ENCODE measurements at regions of chr4 and their contacts with region 1.

Region 1: DNA sequence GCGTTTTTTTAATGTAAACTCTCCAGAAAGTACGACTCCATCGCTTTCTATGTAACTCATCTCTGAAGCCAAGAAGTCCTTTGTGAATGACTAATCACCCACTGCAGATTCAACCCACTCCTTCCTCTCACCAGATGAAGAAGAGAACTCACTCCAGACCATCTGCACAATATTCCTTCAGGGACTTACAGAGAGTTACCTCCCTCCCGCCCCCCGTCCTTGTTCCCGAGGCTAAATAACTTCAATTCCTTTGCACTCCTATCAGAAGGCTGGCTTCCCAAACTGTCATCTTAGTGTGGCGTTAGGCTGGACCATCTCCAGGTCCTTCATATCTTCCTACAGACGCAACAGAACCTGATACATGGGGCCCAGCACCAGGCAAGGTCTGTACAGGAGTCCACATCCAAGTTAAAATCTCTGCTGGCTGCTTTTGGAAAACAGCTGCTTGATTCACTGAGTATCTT is 82.4 kb downstream of the AFAP1 start:
- DNase-seq: no peak
- H3K4me3 Mint-ChIP-seq: peak overlapping the region; percentile 54
- H3K27ac Mint-ChIP-seq: peak overlapping the region; percentile 93
- H3K4me1 Mint-ChIP-seq: peaks cover 60% of the 10 kb centered on the region
- H3K27me3 Mint-ChIP-seq: peaks cover 16% of the 10 kb centered on the region

Region 2: DNA sequence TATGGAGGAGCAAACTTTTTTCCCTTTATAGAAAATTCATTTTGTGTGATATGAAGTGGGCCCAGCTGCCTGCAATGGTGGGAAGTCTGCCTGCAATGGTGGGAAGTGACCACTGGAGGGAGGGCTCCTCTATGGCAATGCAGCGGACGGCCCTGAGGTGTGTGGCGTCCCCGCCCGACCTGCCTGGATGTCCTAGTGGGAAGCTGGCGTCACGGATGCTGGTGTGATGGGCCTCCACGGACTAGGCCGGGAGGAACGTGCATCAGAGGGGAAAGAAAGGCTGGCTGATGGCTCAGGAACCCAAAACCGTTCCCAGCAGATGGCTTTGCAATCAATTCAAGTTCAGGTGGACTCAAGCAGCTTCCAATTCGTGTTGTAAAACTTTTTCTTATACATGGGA is 95.5 kb before region 1 on chr4:
- intact Hi-C with region 1: loop called (anchors 5 kb)
- DNase-seq: peak; percentile 26
- H3K4me3 Mint-ChIP-seq: no peak overlapping the region
- H3K27ac Mint-ChIP-seq: no peak overlapping the region
- H3K4me1 Mint-ChIP-seq: peaks cover 43% of the 10 kb centered on the region
- H3K27me3 Mint-ChIP-seq: no peaks in the 10 kb centered on the region

Region 3: DNA sequence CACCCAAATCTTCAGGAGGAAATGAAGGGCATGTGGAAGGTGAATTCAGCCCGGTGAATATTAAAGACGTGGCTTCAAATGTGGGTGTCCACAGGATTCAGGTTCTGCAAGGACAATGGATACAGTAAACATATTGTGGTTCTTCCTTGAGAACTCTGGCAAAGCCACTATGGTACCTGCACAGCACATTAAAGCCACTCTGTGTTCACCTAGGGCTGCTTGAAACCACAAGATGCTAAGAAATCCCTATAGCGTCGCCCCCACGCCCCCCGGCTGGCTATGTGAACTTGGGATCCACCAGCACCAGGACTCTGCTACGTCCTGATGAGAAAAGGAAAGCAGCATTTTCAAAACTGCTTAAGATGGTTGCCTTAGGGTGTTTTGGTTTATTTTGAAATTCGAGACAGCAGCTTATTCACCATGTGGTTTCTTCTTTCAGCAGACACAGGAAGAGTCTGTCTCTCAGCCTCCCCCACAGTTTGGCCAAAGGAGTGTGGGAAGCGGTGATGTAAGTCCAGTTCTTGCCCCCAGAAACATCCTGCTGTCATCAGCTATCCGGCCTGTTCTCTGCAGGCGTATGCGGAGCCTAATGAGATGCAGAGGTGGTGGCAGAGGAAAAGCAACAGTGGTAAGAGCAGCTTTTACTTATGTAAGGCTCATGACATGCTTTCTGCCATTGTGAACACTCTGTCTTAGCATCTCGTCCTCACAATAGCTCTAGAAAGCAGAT is 29.1 kb before region 1 on chr4:
- intact Hi-C with region 1: loop called (anchors 1 kb)
- DNase-seq: peak; percentile 21
- H3K4me3 Mint-ChIP-seq: peak overlapping the region; percentile 41
- H3K27ac Mint-ChIP-seq: peak overlapping the region; percentile 72
- H3K4me1 Mint-ChIP-seq: peaks cover 57% of the 10 kb centered on the region
- H3K27me3 Mint-ChIP-seq: peaks cover 4% of the 10 kb centered on the region

Region 4: GRCh38 chr4:7939377-7940108 is 82.3 kb after region 1 on chr4 and contains the start of gene AFAP1:
- intact Hi-C with region 1: loop called (anchors 2 kb)
- DNase-seq: peak; percentile 85
- H3K4me3 Mint-ChIP-seq: peak within 1 kb of the TSS; percentile 74
- H3K27ac Mint-ChIP-seq: no peak within 1 kb of the TSS
- H3K4me1 Mint-ChIP-seq: peaks cover 22% of the 10 kb centered on the region
- H3K27me3 Mint-ChIP-seq: peaks cover 25% of the 10 kb centered on the region
- total RNA-seq, gene AFAP1: 48.3 and 48.4 TPM in 2 replicates